Caco-2 (cell line): ENCODE measurements at regions of chr22 and their contacts with region 1.

Region 1: GRCh38 chr22:38872172-38872830 is at the start of gene CBX6:
- DNase-seq: peak; percentile 93 to 98
- H3K4me3 ChIP-seq: peak within 1 kb of the TSS; percentile 53
- H3K4me3 Mint-ChIP-seq: peak within 1 kb of the TSS; percentile 82
- H3K27ac Mint-ChIP-seq: peak within 1 kb of the TSS; percentile 90
- H3K4me1 ChIP-seq: peaks cover 15% of the 10 kb centered on the region
- H3K4me1 Mint-ChIP-seq: peaks cover 26% of the 10 kb centered on the region
- H3K27me3 ChIP-seq: no peaks in the 10 kb centered on the region
- H3K27me3 Mint-ChIP-seq: no peaks in the 10 kb centered on the region
- CTCF ChIP-seq: no peak
- total RNA-seq, gene CBX6: 52.2 and 55.9 TPM in 2 replicates

Region 2: GRCh38 chr22:38262051-38262795 is 610.1 kb before region 1 on chr22:
- CTCF ChIA-PET with region 1: no interaction called
- POLR2A ChIA-PET with region 1: no interaction called
- intact Hi-C with region 1: no loop called
- DNase-seq: peak; percentile 49 to 54
- H3K4me3 ChIP-seq: no peak overlapping the region
- H3K4me3 Mint-ChIP-seq: no peak overlapping the region
- H3K27ac Mint-ChIP-seq: peak overlapping the region; percentile 14
- H3K4me1 ChIP-seq: no peaks in the 10 kb centered on the region; the same call in 1 of the 2 replicates
- H3K4me1 Mint-ChIP-seq: peaks cover 7% of the 10 kb centered on the region
- H3K27me3 ChIP-seq: no peaks in the 10 kb centered on the region
- H3K27me3 Mint-ChIP-seq: no peaks in the 10 kb centered on the region
- CTCF ChIP-seq: peak; percentile 37 to 57

Region 3: DNA sequence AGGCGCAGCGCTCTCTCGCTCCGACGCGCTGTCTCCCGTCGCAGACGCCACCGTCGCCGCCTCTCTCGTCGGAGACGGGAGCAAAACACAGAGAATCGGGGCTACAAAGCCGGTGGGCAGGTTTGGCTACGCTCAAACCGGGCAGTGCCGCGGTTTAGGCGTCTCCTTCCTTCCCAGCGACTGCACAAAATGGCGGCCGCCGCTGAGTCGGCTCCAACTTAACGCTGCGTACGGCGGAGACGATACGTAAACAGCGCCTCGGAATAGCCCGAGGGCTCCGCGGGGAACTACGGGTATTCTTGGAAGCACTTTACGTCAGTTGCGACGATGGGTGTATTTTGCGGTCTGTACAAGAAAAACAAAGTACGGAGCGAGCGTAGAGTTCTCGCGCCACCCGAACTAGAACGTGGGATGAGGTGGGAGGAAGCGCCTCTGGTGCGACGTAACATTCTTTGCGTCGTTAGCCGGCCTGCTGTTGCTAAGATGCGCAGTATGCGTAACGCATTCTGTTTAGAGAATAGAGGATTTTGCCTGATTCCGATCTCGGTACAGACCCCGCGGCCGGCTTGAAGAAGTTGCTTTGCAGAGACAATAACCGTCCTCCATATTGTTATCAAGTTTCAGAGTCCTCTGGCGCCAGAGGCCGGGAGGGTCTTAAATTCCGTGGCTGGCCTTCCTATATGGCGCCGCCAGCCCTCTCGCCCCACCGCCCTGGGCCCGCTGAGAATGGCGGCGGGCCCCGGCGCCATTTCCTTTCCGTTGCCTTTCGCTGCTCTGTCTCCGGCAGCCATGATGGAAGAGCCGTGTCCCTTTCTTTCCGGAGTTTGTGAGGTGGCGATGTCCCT is 366.0 kb before region 1 on chr22 and contains the start of gene DDX17:
- CTCF ChIA-PET with region 1: no interaction called
- POLR2A ChIA-PET with region 1: no interaction called
- intact Hi-C with region 1: no loop called
- DNase-seq: peak; percentile 84 to 86
- H3K4me3 ChIP-seq: peak within 1 kb of the TSS; percentile 98
- H3K4me3 Mint-ChIP-seq: peak within 1 kb of the TSS; percentile 97
- H3K27ac Mint-ChIP-seq: peak within 1 kb of the TSS; percentile 100
- H3K4me1 ChIP-seq: peaks cover 28% of the 10 kb centered on the region
- H3K4me1 Mint-ChIP-seq: peaks cover 21% of the 10 kb centered on the region
- H3K27me3 ChIP-seq: no peaks in the 10 kb centered on the region
- H3K27me3 Mint-ChIP-seq: no peaks in the 10 kb centered on the region
- CTCF ChIP-seq: no peak
- total RNA-seq, gene DDX17: 359 and 367 TPM in 2 replicates

Region 4: DNA sequence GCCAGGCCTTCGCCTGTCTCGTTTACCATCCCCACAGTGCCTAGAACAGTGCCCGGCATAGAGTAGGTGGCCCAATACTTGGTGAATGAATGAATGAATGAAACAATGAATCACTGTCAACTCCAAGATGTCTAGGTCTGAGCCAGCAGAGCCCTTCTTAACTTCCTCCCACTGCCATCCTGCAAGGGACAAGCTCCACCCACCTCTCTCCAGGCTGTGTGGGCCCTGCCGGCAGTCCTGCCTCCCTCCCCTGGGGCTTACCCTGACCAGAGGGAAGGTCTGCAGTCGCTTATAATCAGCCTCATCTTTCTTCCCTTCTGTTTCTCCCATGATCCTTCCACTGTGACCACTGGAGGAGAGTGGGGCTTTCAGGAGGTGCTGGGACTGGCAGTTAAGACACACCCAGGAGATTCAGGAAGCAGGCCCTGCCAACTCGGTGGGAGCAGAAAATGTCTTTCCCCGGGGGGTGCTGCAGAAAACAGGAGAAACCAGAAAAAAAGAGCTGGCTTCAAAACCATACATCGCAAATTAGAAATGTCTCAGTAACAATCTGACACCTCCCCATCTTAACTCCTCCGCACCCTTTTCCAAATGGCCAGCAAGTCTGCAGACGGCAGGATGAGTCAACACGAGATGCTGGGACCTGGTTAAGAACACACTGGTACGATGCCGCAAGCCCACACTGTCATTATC is 89.8 kb before region 1 on chr22:
- CTCF ChIA-PET with region 1: no interaction called
- POLR2A ChIA-PET with region 1: no interaction called
- intact Hi-C with region 1: no loop called
- DNase-seq: no peak
- H3K4me3 ChIP-seq: no peak overlapping the region
- H3K4me3 Mint-ChIP-seq: no peak overlapping the region
- H3K27ac Mint-ChIP-seq: no peak overlapping the region
- H3K4me1 ChIP-seq: no peaks in the 10 kb centered on the region
- H3K4me1 Mint-ChIP-seq: no peaks in the 10 kb centered on the region
- H3K27me3 ChIP-seq: no peaks in the 10 kb centered on the region
- H3K27me3 Mint-ChIP-seq: no peaks in the 10 kb centered on the region
- CTCF ChIP-seq: no peak

Region 5: DNA sequence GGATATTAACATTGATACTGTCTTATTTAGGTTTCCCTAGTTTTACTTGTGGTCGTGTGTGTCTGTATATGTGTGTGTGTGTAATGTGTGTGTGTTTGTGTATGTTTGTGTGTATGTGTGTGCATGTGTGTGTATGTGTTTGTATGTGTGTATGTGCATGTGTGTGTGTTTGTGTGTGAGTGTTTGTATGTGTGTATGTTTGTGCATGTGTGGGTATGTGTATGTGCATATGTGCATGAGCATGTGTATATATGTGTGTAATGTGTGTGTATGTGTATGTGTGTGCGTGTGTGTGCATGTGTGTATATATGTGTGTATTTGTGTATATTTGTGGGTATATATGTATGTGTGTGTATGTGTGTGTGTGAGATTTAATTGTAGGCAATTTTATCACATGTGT is 61.1 kb before region 1 on chr22:
- CTCF ChIA-PET with region 1: no interaction called
- POLR2A ChIA-PET with region 1: no interaction called
- intact Hi-C with region 1: no loop called
- DNase-seq: no peak
- H3K4me3 ChIP-seq: no peak overlapping the region
- H3K4me3 Mint-ChIP-seq: no peak overlapping the region
- H3K27ac Mint-ChIP-seq: no peak overlapping the region
- H3K4me1 ChIP-seq: no peaks in the 10 kb centered on the region
- H3K4me1 Mint-ChIP-seq: no peaks in the 10 kb centered on the region
- H3K27me3 ChIP-seq: no peaks in the 10 kb centered on the region
- H3K27me3 Mint-ChIP-seq: peaks cover 23% of the 10 kb centered on the region
- CTCF ChIP-seq: no peak

Region 6: GRCh38 chr22:38923463-38924346 is 51.4 kb after region 1 on chr22:
- CTCF ChIA-PET with region 1: interaction called, 20 read pairs
- POLR2A ChIA-PET with region 1: interaction called, 5 read pairs
- intact Hi-C with region 1: loop called (anchors 1 kb)
- DNase-seq: peak; percentile 92 to 95
- H3K4me3 ChIP-seq: peak overlapping the region; percentile 3
- H3K4me3 Mint-ChIP-seq: peak overlapping the region; percentile 66
- H3K27ac Mint-ChIP-seq: peak overlapping the region; percentile 76
- H3K4me1 ChIP-seq: peaks cover 55% of the 10 kb centered on the region
- H3K4me1 Mint-ChIP-seq: peaks cover 13% of the 10 kb centered on the region
- H3K27me3 ChIP-seq: no peaks in the 10 kb centered on the region
- H3K27me3 Mint-ChIP-seq: no peaks in the 10 kb centered on the region
- CTCF ChIP-seq: peak; percentile 27 to 29

Region 7: GRCh38 chr22:38981992-38982927 is 110.0 kb after region 1 on chr22 and contains the start of gene APOBEC3B:
- CTCF ChIA-PET with region 1: interaction called, 8 read pairs
- POLR2A ChIA-PET with region 1: interaction called, 3 read pairs
- intact Hi-C with region 1: loop called (anchors 5 kb)
- DNase-seq: peak; percentile 91 to 94
- H3K4me3 ChIP-seq: peak within 1 kb of the TSS; percentile 44
- H3K4me3 Mint-ChIP-seq: peak within 1 kb of the TSS; percentile 80
- H3K27ac Mint-ChIP-seq: peak within 1 kb of the TSS; percentile 91
- H3K4me1 ChIP-seq: peaks cover 19% of the 10 kb centered on the region
- H3K4me1 Mint-ChIP-seq: peaks cover 19% of the 10 kb centered on the region
- H3K27me3 ChIP-seq: no peaks in the 10 kb centered on the region
- H3K27me3 Mint-ChIP-seq: no peaks in the 10 kb centered on the region
- CTCF ChIP-seq: no peak
- total RNA-seq, gene APOBEC3B: 55.8 and 60.9 TPM in 2 replicates

Region 8: DNA sequence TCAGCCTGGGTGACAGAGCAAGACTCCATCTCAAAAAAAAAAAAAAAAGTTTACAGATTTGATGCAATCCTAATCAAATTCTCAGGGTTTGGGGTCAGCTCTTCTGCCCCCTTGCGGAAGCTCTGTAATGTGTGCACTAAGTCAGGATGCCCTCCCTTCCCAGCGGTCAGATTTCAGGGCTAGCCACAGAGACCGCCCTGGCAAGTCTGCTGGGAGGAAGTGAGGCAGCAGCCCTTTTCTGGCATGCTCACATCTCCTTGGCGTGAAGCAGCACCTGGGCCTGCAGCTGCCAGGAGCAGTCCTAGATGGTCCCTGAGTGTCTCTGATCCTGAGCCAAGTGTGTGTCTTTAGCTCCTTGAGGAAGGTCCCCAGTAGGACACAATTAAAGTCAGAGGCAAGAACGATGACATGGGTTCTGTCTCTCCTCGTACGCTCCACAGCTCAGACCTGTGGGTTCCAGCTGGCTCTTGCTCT is 130.9 kb after region 1 on chr22:
- CTCF ChIA-PET with region 1: interaction called, 23 read pairs
- POLR2A ChIA-PET with region 1: no interaction called
- intact Hi-C with region 1: loop called (anchors 1 kb)
- DNase-seq: peak; percentile 70 to 71
- H3K4me3 ChIP-seq: no peak overlapping the region
- H3K4me3 Mint-ChIP-seq: no peak overlapping the region
- H3K27ac Mint-ChIP-seq: no peak overlapping the region
- H3K4me1 ChIP-seq: peaks cover 5% of the 10 kb centered on the region; the same call in 1 of the 2 replicates
- H3K4me1 Mint-ChIP-seq: no peaks in the 10 kb centered on the region
- H3K27me3 ChIP-seq: no peaks in the 10 kb centered on the region; the same call in 1 of the 2 replicates
- H3K27me3 Mint-ChIP-seq: no peaks in the 10 kb centered on the region
- CTCF ChIP-seq: peak in 1 of 2 experiments; percentile 71

Region 9: GRCh38 chr22:39117585-39118191 is 245.4 kb after region 1 on chr22:
- CTCF ChIA-PET with region 1: interaction called, 9 read pairs
- POLR2A ChIA-PET with region 1: no interaction called
- intact Hi-C with region 1: loop called (anchors 1 kb)
- DNase-seq: peak; percentile 69 to 77
- H3K4me3 ChIP-seq: no peak overlapping the region
- H3K4me3 Mint-ChIP-seq: no peak overlapping the region
- H3K27ac Mint-ChIP-seq: peak overlapping the region; percentile 39
- H3K4me1 ChIP-seq: peaks cover 22% of the 10 kb centered on the region
- H3K4me1 Mint-ChIP-seq: peaks cover 25% of the 10 kb centered on the region
- H3K27me3 ChIP-seq: no peaks in the 10 kb centered on the region
- H3K27me3 Mint-ChIP-seq: no peaks in the 10 kb centered on the region
- CTCF ChIP-seq: peak; percentile 37 to 47